ENCODE measurements at regions of chr9 and their contacts with region 1.

Region 1: DNA sequence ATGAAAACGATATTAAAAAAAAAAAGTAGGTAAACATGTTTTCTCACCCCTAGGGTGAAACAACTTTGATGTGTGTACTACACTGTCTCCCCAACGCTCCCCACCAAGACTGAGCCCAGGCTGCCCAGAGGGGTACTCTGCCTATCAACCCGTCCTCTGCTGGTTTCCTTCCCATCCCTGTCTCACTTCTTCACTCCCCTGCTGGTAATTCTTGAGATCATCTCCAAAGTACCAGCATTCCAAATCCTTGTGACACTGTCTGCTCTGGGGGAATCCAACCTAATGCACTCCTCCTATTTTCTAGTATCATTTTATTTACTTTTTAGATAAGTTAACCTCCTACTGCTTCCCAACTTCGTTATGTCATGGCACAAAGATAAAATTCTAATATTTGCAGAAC is 6.3 kb upstream of the APTX start:
- DNase-seq: no peak
- H3K4me3 ChIP-seq: no peak overlapping the region
- H3K27ac ChIP-seq: no peak overlapping the region
- H3K4me1 ChIP-seq: no peaks in the 10 kb centered on the region
- H3K27me3 ChIP-seq: no peaks in the 10 kb centered on the region
- CTCF ChIP-seq: no peak
- EP300 ChIP-seq: no peak
- POLR2A ChIP-seq: no peak

Region 2: DNA sequence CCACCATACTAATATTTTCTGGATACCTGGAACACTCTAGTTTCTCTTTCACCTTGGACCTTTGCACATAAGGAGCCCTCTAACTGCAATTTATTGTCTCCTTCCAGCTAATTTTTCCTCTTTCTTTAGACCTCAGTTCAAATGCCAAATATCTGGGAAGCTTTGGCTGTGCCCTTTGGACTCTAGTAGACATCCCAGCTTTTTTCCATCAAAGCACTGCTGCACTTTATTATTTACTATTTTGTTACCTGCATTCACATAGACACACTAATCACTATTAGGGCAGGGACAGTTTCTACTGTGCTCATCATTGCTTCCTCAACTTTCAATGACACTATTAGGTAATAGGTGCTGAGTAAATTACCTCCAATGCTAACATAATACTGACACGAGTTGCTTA is 483.8 kb before region 1 on chr9:
- intact Hi-C with region 1: no loop called
- DNase-seq: no peak
- H3K4me3 ChIP-seq: peak overlapping the region in 1 of 4 donors; percentile 62
- H3K27ac ChIP-seq: no peak overlapping the region
- H3K4me1 ChIP-seq: peaks cover 8 to 50% (median 43%) of the 10 kb centered on the region in 4 donors
- H3K27me3 ChIP-seq: no peaks in the 10 kb centered on the region
- CTCF ChIP-seq: no peak
- EP300 ChIP-seq: no peak
- POLR2A ChIP-seq: no peak

Region 3: DNA sequence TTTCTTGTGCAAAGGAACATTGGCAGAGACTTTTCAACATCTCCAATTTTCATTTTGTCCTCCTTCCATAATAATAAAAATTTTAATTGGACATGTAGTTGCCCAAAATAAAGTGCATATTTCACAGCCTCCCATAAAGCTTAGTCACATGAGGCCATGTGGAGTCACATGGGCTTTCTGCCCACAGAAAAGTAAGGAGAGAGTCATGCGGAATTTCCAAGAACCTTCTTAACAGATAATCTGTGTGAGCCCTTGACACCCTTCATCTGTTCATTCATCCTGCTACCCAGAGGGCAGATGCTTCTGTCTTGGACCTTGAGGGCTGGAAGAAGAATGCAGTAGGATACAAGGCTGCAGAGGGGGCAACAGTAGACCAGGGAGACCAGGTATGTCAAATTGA is 67.0 kb before region 1 on chr9:
- intact Hi-C with region 1: no loop called
- DNase-seq: no peak
- H3K4me3 ChIP-seq: no peak overlapping the region
- H3K27ac ChIP-seq: no peak overlapping the region
- H3K4me1 ChIP-seq: no peaks in the 10 kb centered on the region
- H3K27me3 ChIP-seq: no peaks in the 10 kb centered on the region
- CTCF ChIP-seq: no peak
- EP300 ChIP-seq: no peak
- POLR2A ChIP-seq: no peak

Region 4: GRCh38 chr9:33024966-33025571 is 17.3 kb after region 1 on chr9 and contains the start of gene DNAJA1:
- intact Hi-C with region 1: loop called (anchors 2 kb)
- DNase-seq: peak; percentile 98
- H3K4me3 ChIP-seq: peak within 1 kb of the TSS; percentile 74 to 99 (median 96)
- H3K27ac ChIP-seq: peak within 1 kb of the TSS; percentile 95 to 100 (median 100)
- H3K4me1 ChIP-seq: peaks cover 52 to 69% (median 67%) of the 10 kb centered on the region in 4 donors
- H3K27me3 ChIP-seq: no peaks in the 10 kb centered on the region
- CTCF ChIP-seq: no peak
- EP300 ChIP-seq: no peak
- POLR2A ChIP-seq: peak; percentile 95
- total RNA-seq, gene DNAJA1: 60.9 to 102 (median 71.1) TPM

Measured in esophagus muscularis mucosa (tissue), 4 donors.